ENCODE measurements at regions of chr1 and their contacts with region 1.

Region 1: DNA sequence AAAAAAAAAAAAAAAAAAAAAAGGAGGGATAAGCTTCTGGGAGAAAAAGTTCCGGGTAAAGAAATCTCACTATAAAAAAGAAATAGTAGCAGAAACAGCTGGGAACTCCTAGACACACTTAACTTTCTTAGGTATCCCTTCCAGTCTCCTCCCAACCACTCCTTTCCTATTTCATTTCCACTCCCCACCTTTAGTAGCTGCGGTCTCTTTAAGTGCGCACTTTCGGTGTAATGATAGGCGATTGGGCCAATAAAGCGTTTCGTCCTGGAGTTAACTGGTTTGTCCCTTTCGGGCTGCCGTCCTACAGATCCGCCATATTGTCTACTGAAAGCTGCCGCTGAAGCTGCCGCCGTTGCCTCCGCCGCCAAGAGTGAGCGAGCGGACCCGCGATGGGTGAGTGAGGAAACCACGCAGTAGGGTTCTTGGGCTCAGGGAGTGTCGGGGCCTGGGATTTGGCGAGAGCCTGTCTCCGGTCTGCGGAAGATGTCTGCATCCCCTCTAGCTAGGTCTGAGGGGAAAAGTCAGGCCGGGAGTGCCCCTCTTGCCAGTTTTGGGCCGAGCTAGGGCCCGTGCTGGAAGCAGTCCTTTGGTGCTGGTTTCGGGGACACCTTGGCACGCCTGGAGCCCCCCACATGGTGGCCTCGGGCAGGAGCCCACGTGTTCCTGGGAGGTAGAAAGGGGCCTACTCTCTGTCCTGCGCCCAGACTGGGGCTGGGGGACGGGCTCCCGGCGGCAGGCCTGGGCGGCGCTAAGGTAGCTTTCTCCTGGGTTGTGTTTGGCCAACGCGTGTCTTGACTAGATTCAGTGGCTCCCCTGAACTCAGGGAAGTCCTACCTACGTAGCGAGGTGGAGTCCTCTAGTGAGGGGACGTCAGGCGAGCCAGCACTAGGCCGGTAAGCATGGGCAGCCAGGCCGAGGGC is at the start of gene KPNA6:
- DNase-seq: peak; percentile 94
- H3K4me3 Mint-ChIP-seq: peak within 1 kb of the TSS; percentile 100
- H3K27ac Mint-ChIP-seq: peak within 1 kb of the TSS; percentile 96
- H3K4me1 Mint-ChIP-seq: peaks cover 40% of the 10 kb centered on the region
- H3K27me3 Mint-ChIP-seq: no peaks in the 10 kb centered on the region
- total RNA-seq, gene KPNA6: 64.3 to 65.1 TPM

Region 2: DNA sequence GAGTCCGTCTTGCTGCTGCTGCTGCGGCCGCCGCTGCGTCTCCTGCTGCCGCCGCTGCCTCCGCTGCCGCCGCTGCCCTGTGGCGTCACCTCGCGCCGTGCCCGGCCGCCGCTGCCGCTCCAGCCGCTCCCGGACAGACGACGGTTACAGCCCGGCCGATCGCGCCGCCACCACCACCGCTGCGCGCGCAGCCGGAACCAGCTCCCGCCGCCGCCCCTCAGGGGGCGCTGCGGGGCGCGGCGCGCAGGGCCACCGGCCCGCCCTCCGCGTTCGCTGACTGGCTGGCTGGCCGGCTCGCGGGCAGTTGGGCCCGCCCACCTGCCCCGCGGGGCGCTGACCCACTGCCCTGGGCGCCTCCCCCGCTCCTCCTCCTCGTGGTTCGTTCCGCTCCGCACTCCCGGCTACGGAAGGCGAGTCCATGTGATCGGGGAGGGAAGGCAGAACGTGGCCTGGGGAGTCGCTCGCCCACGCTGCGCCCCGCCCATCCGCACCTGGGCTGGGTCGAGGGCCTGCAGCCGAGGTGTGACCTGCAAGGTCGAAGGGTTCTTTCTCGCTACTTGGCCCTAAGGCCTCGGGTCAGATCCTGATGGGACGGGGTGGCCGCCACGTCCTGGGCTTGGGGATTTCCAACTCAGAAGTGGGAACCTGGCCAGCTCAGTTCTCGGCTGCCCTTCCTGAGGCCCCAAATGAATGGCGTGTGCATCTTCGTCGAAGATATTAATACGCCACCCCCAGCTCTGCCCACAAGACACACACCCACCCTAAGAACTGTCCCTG is 169.6 kb before region 1 on chr1 and contains the start of gene PTP4A2:
- CTCF ChIA-PET with region 1: no interaction called
- POLR2A ChIA-PET with region 1: no interaction called
- DNase-seq: peak; percentile 92
- H3K4me3 Mint-ChIP-seq: peak within 1 kb of the TSS; percentile 100
- H3K27ac Mint-ChIP-seq: peak within 1 kb of the TSS; percentile 97
- H3K4me1 Mint-ChIP-seq: peaks cover 78% of the 10 kb centered on the region
- H3K27me3 Mint-ChIP-seq: no peaks in the 10 kb centered on the region
- total RNA-seq, gene PTP4A2: 337 to 349 TPM

Region 3: GRCh38 chr1:32013386-32014198 is 94.4 kb before region 1 on chr1 and contains the start of gene KHDRBS1:
- CTCF ChIA-PET with region 1: interaction called, 4 read pairs
- POLR2A ChIA-PET with region 1: interaction called, 16 read pairs
- DNase-seq: peak; percentile 99
- H3K4me3 Mint-ChIP-seq: peak within 1 kb of the TSS; percentile 94
- H3K27ac Mint-ChIP-seq: peak within 1 kb of the TSS; percentile 94
- H3K4me1 Mint-ChIP-seq: peaks cover 30% of the 10 kb centered on the region
- H3K27me3 Mint-ChIP-seq: no peaks in the 10 kb centered on the region
- total RNA-seq, gene KHDRBS1: 168 to 169 TPM

Region 4: DNA sequence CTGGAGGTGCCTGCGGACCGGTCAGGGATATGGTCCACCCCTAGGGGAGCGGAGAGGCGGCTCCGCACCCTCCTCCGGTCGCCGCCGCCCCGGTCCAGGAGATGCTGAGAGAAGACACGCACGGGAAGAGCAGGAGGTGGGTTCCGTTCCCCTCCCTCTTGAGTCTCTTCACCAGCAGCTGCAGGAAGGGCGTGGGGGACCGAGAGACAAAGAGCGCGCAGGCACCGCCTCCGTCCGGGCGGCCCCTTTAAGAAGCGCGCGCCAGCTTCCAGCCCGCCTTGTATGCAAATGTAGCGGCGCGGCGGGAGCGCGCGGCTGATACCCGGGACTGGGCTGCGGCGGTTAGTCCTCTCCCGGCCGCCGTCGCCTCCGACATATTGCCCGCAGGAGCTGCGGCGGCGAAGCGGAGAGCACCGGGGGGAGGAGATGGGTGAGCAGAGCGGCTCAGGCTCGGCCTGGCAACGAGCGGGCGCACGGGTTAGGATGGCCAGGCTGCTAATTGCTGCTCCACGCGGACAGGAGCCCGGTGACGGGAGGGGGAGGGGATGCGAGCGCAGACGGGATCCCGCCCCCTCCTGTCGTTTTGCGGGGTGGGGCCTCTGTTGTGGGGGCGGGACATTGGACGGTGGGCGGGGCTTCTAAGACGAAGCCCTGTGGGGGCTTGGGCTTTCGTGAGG is 35.2 kb before region 1 on chr1 and contains the start of gene TMEM39B:
- CTCF ChIA-PET with region 1: interaction called, 28 read pairs
- POLR2A ChIA-PET with region 1: interaction called, 33 read pairs
- DNase-seq: peak; percentile 96
- H3K4me3 Mint-ChIP-seq: peak within 1 kb of the TSS; percentile 77
- H3K27ac Mint-ChIP-seq: peak within 1 kb of the TSS; percentile 83
- H3K4me1 Mint-ChIP-seq: peaks cover 46% of the 10 kb centered on the region
- H3K27me3 Mint-ChIP-seq: no peaks in the 10 kb centered on the region
- total RNA-seq, gene TMEM39B: 24.5 to 28.0 TPM

Region 5: DNA sequence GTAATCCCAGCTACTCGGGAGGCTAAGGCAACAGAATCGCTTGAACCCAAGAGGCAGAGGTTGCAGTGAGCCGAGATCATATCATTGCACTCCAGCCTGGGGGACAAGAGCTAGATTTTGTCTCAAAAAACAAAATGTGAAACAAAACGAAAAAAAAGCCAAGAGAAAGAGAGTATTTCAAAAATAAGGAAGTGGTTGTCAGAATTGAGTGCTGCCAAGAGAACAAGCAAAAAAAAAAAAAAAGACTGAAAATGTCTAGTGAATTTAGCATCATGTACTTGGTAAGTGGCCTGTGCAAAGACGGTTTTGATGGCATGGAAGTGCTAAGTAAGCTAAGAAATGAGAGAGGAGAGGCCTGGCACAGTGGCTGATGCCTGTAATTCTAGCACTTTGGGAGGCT is 14.1 kb after region 1 on chr1:
- CTCF ChIA-PET with region 1: interaction called, 16 read pairs
- POLR2A ChIA-PET with region 1: interaction called, 14 read pairs
- DNase-seq: no peak
- H3K4me3 Mint-ChIP-seq: no peak overlapping the region
- H3K27ac Mint-ChIP-seq: peak overlapping the region; percentile 10
- H3K4me1 Mint-ChIP-seq: peaks cover 23% of the 10 kb centered on the region
- H3K27me3 Mint-ChIP-seq: no peaks in the 10 kb centered on the region

Region 6: DNA sequence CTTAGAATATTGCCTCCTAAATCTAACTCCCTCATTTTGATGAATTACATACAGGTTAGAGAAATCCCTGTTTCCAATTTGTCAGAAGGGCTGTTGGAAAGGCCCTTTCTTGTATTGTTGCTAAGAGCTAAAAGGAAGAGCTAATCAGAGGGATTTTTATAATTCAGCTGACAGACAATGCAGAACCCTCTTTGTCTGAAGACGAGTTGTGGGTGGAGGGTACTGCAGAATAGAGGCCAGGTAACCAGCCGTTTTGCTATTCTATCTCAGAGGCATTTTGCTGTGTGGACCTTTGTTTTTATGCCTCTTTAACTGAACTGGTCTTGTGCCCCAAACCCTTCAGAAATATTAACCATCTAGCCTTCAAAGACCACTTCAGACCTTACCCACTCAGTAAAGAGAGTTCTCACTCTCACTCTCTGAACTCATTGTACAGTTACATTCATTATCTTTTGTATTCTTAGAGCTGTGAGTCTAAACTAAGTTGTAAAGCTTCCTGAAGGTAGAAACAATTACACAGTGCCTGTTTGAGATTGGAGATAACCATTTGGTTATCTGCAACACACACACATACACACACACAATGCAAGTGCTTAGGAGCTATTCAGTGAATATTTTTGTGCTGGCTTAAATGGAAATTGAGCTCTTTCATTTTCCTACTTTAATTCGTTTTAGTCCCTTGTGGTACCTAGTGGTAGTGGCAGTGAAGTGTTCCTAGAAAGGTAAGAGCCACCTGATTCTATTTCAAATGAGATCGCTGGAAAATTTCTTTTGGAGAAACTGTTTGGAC is 19.6 kb after region 1 on chr1:
- CTCF ChIA-PET with region 1: interaction called, 10 read pairs
- POLR2A ChIA-PET with region 1: interaction called, 11 read pairs
- DNase-seq: no peak
- H3K4me3 Mint-ChIP-seq: no peak overlapping the region
- H3K27ac Mint-ChIP-seq: no peak overlapping the region
- H3K4me1 Mint-ChIP-seq: peaks cover 21% of the 10 kb centered on the region
- H3K27me3 Mint-ChIP-seq: no peaks in the 10 kb centered on the region

Region 7: GRCh38 chr1:32142446-32143301 is 34.7 kb after region 1 on chr1:
- CTCF ChIA-PET with region 1: interaction called, 14 read pairs
- POLR2A ChIA-PET with region 1: interaction called, 6 read pairs
- DNase-seq: no peak
- H3K4me3 Mint-ChIP-seq: no peak overlapping the region
- H3K27ac Mint-ChIP-seq: no peak overlapping the region
- H3K4me1 Mint-ChIP-seq: peaks cover 49% of the 10 kb centered on the region
- H3K27me3 Mint-ChIP-seq: no peaks in the 10 kb centered on the region

Region 8: DNA sequence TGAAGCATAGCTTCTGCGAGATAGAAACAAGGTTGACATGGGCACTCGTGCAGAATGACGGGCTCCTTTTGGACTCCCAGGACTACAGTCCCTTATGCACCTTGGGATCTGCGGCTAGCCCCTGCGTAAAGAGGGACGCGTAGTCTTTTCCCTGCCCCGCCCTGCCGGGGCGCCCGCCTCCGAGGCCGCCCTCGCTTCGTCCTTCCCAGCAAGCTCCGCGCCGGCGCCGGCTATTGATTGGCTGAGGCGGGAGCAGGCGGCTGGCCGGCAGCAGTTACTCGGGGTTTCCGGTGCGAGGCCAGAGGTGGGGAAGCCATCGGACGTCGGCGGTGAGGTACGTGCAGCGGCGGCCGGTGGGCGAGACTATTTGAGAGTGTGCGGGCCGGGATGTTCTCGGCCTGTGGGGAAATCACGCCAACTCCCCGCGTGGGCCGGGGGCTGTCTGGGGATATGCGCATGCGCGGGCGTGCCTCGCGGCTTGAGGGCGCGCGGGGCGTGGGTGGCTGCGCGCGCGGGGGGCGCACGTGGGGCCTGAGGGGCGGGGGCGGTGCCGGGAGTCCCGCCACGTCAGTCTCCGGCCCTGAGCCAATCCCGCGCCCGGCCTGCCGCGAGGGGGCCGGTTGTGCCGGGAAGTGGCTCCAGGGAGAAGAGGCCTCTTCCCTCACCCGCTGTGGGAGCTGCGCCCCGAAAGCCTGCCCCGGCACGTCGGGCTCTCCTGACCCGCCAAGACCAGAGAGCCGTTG is 71.6 kb after region 1 on chr1 and contains the start of gene TXLNA:
- CTCF ChIA-PET with region 1: interaction called, 15 read pairs
- POLR2A ChIA-PET with region 1: interaction called, 27 read pairs
- DNase-seq: peak; percentile 92
- H3K4me3 Mint-ChIP-seq: peak within 1 kb of the TSS; percentile 88
- H3K27ac Mint-ChIP-seq: peak within 1 kb of the TSS; percentile 96
- H3K4me1 Mint-ChIP-seq: peaks cover 43% of the 10 kb centered on the region
- H3K27me3 Mint-ChIP-seq: no peaks in the 10 kb centered on the region
- total RNA-seq, gene TXLNA: 79.8 to 81.2 TPM